ENCODE measurements at regions of chr10 and their contacts with region 1.

Region 1: GRCh38 chr10:74165530-74165901 is 14.5 kb downstream of the ADK start:
- DNase-seq: no peak
- H3K4me3 ChIP-seq: no peak overlapping the region
- H3K27ac ChIP-seq: no peak overlapping the region
- H3K4me1 ChIP-seq: peaks cover 0 to 9% (median 0%) of the 10 kb centered on the region in 4 donors
- H3K27me3 ChIP-seq: no peaks in the 10 kb centered on the region
- CTCF ChIP-seq: no peak

Region 2: DNA sequence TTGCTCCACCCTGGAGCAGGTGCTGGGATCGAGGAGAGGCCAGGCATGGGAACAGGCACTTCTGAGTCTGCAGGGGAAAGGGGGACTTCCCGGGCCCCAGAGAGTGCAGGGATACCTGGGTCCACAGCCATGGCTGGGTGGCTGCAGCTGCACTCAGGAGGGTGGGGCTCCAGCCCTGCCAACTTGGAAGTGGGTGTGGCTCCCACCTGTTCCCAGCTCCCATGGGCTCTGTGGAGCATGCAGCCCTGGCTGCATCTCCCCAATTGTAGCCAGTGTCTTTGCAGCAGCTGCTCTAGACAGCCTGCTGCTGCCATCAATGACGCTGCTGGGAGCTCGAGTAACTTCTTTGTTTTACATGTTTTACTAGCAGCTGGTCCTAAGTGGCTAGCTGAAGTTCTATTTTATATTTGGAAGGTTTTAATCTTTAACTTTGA is 42.6 kb after region 1 on chr10:
- intact Hi-C with region 1: no loop called
- DNase-seq: no peak
- H3K4me3 ChIP-seq: no peak overlapping the region
- H3K27ac ChIP-seq: no peak overlapping the region
- H3K4me1 ChIP-seq: peaks cover 0 to 4% (median 0%) of the 10 kb centered on the region in 4 donors
- H3K27me3 ChIP-seq: no peaks in the 10 kb centered on the region
- CTCF ChIP-seq: no peak

Region 3: GRCh38 chr10:74234569-74234968 is 69.1 kb after region 1 on chr10:
- intact Hi-C with region 1: loop called (anchors 10 kb)
- DNase-seq: no peak
- H3K4me3 ChIP-seq: no peak overlapping the region
- H3K27ac ChIP-seq: no peak overlapping the region
- H3K4me1 ChIP-seq: no peaks in the 10 kb centered on the region
- H3K27me3 ChIP-seq: no peaks in the 10 kb centered on the region
- CTCF ChIP-seq: peak; percentile 38 to 39

Measured in tibial artery (tissue), 4 donors.